ENCODE measurements at regions of chr11 and their contacts with region 1.

Region 1: GRCh38 chr11:128603752-128604414 is 16.5 kb upstream of the ETS1 start:
- DNase-seq: peak; percentile 63
- ATAC-seq: peak; percentile 69
- H3K4me3 ChIP-seq: no peak overlapping the region
- H3K4me3 Mint-ChIP-seq: peak overlapping the region; percentile 35
- H3K27ac ChIP-seq: peak overlapping the region in 1 of 2 donors; percentile 10
- H3K27ac Mint-ChIP-seq: peak overlapping the region; percentile 72
- H3K4me1 ChIP-seq: peaks cover 55 to 59% of the 10 kb centered on the region in 2 donors
- H3K4me1 Mint-ChIP-seq: peaks cover 72% of the 10 kb centered on the region
- H3K27me3 ChIP-seq: no peaks in the 10 kb centered on the region
- H3K27me3 Mint-ChIP-seq: no peaks in the 10 kb centered on the region
- CTCF ChIP-seq: no peak

Region 2: DNA sequence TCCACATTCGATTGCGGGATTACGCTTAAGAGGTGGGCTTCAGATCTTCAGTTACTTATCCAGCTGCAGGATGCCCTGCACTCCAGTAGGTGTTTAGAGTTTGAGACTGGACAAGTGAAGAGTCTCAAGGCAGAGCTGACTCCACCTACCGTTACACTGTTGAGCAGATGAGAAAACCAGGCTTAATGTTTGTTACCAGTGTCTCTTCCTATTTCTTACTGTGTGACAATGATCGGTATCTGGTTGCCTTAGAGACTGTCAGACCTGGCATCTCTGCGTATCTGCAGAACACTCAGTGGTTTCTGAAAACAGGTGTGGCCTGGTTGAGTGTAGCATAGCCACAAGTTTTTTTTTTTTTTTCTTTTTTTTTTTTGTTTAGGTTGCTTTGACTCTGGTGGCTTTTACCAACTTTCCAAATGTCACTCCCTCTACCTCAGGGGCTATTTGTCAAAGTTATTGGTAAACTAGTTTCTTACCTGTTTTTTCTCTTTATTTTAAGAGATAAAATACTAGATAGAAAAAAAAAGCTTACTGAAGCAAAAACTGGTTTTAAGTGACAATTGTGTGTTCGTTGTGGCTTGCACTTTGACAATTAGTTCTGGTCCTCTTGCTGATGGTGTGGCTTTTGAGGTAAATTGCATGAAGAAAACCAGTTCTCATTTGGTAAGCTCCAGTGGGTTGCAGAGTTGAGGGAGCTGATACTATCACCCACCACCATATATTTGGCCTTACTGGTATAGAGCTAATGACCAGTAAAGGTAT is 301.3 kb before region 1 on chr11:
- CTCF ChIA-PET with region 1: no interaction called
- POLR2A ChIA-PET with region 1: interaction called, 10 read pairs
- intact Hi-C with region 1: no loop called
- DNase-seq: peak; percentile 82
- ATAC-seq: peak; percentile 90
- H3K4me3 ChIP-seq: no peak overlapping the region
- H3K4me3 Mint-ChIP-seq: peak overlapping the region; percentile 44
- H3K27ac ChIP-seq: peak overlapping the region; percentile 67 to 85
- H3K27ac Mint-ChIP-seq: peak overlapping the region; percentile 88
- H3K4me1 ChIP-seq: peaks cover 75 to 76% of the 10 kb centered on the region in 2 donors
- H3K4me1 Mint-ChIP-seq: peaks cover 77% of the 10 kb centered on the region
- H3K27me3 ChIP-seq: no peaks in the 10 kb centered on the region
- H3K27me3 Mint-ChIP-seq: no peaks in the 10 kb centered on the region
- CTCF ChIP-seq: no peak

Region 3: DNA sequence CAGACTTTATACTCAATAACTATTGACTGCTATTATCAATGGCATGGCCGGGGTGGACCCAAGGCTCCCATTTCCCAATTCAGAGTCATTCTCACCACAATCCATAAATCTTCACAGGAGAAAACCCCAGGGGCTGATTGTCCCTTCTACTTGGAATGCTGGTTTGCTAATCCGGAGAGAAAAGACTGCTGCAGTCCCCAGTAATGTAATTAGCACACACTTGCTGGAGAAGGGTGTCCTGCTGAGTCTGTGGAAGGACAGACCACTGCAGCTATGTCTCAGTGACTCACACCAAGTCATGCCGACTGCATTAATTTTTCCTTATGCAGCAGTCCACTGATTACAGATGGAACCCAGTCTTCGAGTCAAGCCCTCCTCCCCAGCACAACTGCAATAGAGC is 10.6 kb before region 1 on chr11:
- CTCF ChIA-PET with region 1: interaction called, 21 read pairs
- POLR2A ChIA-PET with region 1: interaction called, 4 read pairs
- intact Hi-C with region 1: no loop called
- DNase-seq: no peak
- ATAC-seq: no peak
- H3K4me3 ChIP-seq: no peak overlapping the region
- H3K4me3 Mint-ChIP-seq: no peak overlapping the region
- H3K27ac ChIP-seq: no peak overlapping the region
- H3K27ac Mint-ChIP-seq: no peak overlapping the region
- H3K4me1 ChIP-seq: peaks cover 25% of the 10 kb centered on the region in 2 donors
- H3K4me1 Mint-ChIP-seq: peaks cover 45% of the 10 kb centered on the region
- H3K27me3 ChIP-seq: no peaks in the 10 kb centered on the region
- H3K27me3 Mint-ChIP-seq: no peaks in the 10 kb centered on the region
- CTCF ChIP-seq: no peak

Region 4: DNA sequence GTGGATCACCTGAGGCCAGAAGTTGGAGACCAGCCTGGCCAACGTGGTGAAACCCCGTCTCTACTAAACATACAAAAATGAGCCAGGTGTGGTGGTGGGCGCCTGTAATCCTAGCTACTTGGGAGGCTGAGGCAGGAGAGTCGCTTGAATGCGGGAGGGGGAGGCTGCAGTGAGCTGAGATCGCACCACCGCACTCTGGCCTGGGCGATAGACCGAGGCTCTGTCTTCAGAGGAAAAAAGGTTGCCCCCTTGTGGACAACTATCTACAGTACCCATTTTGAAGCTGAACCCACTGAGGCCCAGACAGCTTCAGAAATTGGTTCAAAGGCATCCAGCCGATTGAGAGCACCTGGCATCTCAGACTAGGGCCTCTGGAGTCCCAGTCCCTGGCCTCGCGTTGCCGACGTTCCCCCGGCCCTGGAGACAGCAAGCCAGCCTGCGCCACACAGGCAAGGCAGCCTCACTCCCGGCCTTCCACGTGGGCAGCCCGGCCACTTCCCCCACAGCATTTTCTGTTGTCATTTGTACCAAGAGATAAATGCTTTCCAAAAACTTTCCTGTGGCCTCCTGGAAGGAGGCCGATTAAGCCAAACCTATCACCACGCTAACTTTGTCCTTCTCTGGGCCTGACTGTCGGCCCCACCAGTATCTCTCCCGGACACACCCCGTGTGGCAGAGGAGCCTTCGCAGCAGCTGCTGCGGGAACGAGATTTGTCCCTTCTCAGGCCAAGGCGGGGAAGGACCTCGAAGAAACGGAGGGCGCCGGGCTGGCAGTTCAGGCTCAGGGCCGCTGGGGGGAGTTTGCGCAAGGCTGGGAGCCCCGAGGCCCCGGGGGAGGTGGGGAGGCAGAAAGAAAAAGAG is 172.8 kb after region 1 on chr11:
- CTCF ChIA-PET with region 1: interaction called, 10 read pairs
- POLR2A ChIA-PET with region 1: no interaction called
- intact Hi-C with region 1: no loop called
- DNase-seq: peak; percentile 58
- ATAC-seq: peak; percentile 35
- H3K4me3 ChIP-seq: no peak overlapping the region
- H3K4me3 Mint-ChIP-seq: no peak overlapping the region
- H3K27ac ChIP-seq: no peak overlapping the region
- H3K27ac Mint-ChIP-seq: peak overlapping the region; percentile 51
- H3K4me1 ChIP-seq: peaks cover 25 to 36% of the 10 kb centered on the region in 2 donors
- H3K4me1 Mint-ChIP-seq: peaks cover 42% of the 10 kb centered on the region
- H3K27me3 ChIP-seq: no peaks in the 10 kb centered on the region
- H3K27me3 Mint-ChIP-seq: no peaks in the 10 kb centered on the region
- CTCF ChIP-seq: peak; percentile 60

Region 5: DNA sequence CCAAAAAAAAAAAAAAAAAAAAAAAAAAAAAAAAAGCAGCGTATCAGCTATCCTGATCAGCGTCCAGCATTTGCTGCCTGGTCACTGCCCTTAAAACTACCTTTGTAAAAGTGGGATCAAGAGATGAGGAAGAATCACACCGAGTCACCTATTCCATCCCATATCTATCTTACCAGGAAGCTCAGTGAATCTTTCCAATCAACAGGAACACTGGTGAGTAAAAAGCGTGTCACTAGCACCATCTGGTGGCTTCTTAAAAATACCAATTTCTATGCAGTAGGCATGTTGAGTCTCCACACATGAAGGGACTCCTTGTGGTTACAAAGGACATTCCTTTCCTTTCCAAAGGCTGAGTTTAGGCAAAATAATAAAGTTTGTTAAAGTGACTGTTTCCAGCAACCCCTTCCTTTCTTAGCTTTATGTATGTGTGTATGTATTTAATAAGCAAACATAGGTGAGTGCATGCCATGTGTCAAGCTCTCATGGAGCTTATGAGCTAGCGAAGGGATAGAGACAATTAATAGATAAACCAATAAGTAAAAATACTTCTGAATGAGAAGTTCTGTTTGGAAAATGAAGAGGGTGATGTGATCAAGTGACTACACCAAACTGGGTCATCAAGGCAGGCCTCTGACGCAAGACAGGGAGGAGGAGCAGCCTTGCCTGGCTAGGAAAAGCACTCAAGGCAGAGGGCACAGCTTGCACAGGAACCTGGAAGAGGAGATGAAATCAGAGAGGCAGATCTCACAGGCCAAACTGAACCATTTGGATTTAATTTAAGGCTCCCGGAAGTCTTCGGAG is 352.7 kb after region 1 on chr11:
- CTCF ChIA-PET with region 1: interaction called, 15 read pairs
- POLR2A ChIA-PET with region 1: no interaction called
- intact Hi-C with region 1: no loop called
- DNase-seq: peak; percentile 73
- ATAC-seq: no peak
- H3K4me3 ChIP-seq: no peak overlapping the region
- H3K4me3 Mint-ChIP-seq: no peak overlapping the region
- H3K27ac ChIP-seq: no peak overlapping the region
- H3K27ac Mint-ChIP-seq: no peak overlapping the region
- H3K4me1 ChIP-seq: peaks cover 0 to 4% of the 10 kb centered on the region in 2 donors
- H3K4me1 Mint-ChIP-seq: peaks cover 2% of the 10 kb centered on the region
- H3K27me3 ChIP-seq: peaks cover 0 to 13% (median 1%) of the 10 kb centered on the region in 4 experiments
- H3K27me3 Mint-ChIP-seq: peaks cover 30% of the 10 kb centered on the region
- CTCF ChIP-seq: peak; percentile 86